ENCODE measurements at regions of chr5 and their contacts with region 1.

Region 1: DNA sequence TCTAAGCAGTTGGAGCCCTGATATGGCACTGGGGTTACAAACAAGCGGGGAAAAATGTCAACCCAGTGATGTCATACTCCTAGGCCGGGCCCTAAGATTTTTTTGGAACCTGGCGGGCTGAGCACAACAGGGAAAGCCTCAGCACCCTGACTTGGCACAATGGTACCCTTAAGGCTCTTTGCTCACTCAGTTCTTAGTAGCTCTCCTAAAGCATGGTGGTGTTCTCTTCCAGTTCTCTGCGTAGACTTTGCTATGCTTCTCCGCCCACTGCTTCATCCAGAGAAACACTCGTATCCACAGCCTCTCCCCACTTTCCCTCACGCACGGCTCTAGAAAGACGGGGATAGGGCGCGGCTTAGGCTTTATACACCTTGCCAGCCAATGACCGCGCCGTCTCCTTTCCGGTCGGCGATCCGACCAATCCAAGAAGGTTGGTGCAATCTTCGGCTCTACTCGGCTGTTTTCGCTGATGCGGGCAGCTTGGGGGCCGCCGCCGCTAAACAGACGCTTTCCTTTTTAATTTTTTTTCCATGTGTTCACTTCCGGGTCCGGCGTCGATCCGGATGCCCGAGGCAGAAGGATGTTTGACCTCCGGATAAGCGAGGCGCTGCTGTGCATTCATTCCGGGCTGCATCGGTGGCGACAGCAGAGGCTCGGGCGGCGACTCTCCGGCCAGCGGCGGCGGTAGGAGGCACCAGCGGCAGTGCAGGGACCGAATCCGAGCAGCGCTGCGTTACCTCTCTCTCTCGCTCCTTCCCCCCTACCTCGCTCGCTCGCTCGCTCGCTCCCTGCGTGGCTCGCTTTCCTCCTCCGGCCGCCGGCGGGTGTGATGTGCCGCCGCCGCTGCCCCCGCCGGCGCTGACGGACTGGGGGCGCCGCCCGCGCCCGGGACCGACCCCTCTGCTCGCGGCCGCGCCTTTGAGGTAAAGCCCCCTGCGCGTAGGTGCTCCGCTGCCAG is at the start of gene CSNK1G3:
- DNase-seq: peak; percentile 74 to 94 (median 89)
- ATAC-seq: peak; percentile 91
- H3K4me3 ChIP-seq: peak within 1 kb of the TSS; percentile 73
- H3K4me3 Mint-ChIP-seq: peak within 1 kb of the TSS; percentile 92 to 100 (median 99)
- H3K27ac ChIP-seq: peak within 1 kb of the TSS; percentile 75
- H3K27ac Mint-ChIP-seq: peak within 1 kb of the TSS; percentile 96 to 99 (median 98)
- H3K4me1 ChIP-seq: peaks cover 15 to 24% of the 10 kb centered on the region in 2 donors
- H3K4me1 Mint-ChIP-seq: peaks cover 29 to 55% (median 45%) of the 10 kb centered on the region in 7 donors
- H3K27me3 ChIP-seq: no peaks in the 10 kb centered on the region
- H3K27me3 Mint-ChIP-seq: peaks cover 0 to 16% (median 0%) of the 10 kb centered on the region in 5 donors
- total RNA-seq, gene CSNK1G3: 33.1 to 83.8 (median 71.0) TPM

Region 2: DNA sequence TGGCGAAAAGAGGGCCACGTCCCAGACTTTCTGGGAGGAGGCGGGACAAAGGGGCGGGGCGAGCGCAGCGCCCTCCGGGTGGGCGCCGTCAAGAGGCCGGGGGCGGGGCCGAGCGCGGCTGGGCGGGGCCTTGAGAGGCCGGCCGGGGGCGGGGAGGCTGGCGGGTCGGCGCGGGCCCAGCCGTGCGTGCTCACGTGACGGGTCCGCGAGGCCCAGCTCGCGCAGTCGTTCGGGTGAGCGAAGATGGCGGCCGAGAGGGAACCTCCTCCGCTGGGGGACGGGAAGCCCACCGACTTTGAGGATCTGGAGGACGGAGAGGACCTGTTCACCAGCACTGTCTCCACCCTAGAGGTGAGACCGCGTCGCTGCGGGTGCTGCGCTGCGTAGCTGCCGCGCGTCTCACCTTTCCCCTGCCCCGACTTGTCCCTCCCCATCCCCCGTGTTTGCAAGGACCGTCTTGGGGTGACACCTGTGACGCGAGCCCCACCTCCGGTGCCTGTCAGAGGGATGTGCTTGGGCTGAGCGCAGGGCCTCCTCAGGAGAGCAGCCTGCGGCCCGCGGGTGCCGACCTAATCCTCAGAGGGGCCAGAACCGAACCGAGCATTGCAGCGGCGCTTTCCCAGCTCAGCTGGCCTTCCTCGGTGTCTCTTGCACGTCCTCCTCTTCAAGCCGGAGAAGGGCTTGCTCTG is 736.9 kb before region 1 on chr5 and contains the start of gene SNX2:
- CTCF ChIA-PET with region 1: no interaction called
- POLR2A ChIA-PET with region 1: interaction called, 4 read pairs
- intact Hi-C with region 1: loop called (anchors 1 to 5 kb)
- DNase-seq: peak; percentile 82 to 89 (median 87)
- ATAC-seq: peak; percentile 95
- H3K4me3 ChIP-seq: peak within 1 kb of the TSS; percentile 79
- H3K4me3 Mint-ChIP-seq: peak within 1 kb of the TSS; percentile 90 to 98 (median 95)
- H3K27ac ChIP-seq: peak within 1 kb of the TSS; percentile 86
- H3K27ac Mint-ChIP-seq: peak within 1 kb of the TSS; percentile 84 to 97 (median 94)
- H3K4me1 ChIP-seq: peaks cover 22 to 23% of the 10 kb centered on the region in 2 donors
- H3K4me1 Mint-ChIP-seq: peaks cover 26 to 57% (median 48%) of the 10 kb centered on the region in 7 donors
- H3K27me3 ChIP-seq: no peaks in the 10 kb centered on the region
- H3K27me3 Mint-ChIP-seq: peaks cover 0 to 16% (median under 1%) of the 10 kb centered on the region in 5 donors
- total RNA-seq, gene SNX2: 35.7 to 79.7 (median 49.5) TPM

Region 3: GRCh38 chr5:123423278-123424149 is 88.4 kb before region 1 on chr5 and contains the start of gene CEP120:
- CTCF ChIA-PET with region 1: interaction called, 5 read pairs
- POLR2A ChIA-PET with region 1: interaction called, 88 read pairs
- intact Hi-C with region 1: loop called (anchors 1 kb)
- DNase-seq: peak; percentile 86 to 98 (median 96)
- ATAC-seq: peak; percentile 98
- H3K4me3 ChIP-seq: peak within 1 kb of the TSS; percentile 73
- H3K4me3 Mint-ChIP-seq: no peak within 1 kb of the TSS
- H3K27ac ChIP-seq: peak within 1 kb of the TSS; percentile 97
- H3K27ac Mint-ChIP-seq: peak within 1 kb of the TSS in 2 of 9 donors; percentile 99 to 100
- H3K4me1 ChIP-seq: peaks cover 26 to 29% of the 10 kb centered on the region in 2 donors
- H3K4me1 Mint-ChIP-seq: peaks cover 11 to 27% (median 20%) of the 10 kb centered on the region in 7 donors
- H3K27me3 ChIP-seq: no peaks in the 10 kb centered on the region
- H3K27me3 Mint-ChIP-seq: no peaks in the 10 kb centered on the region
- total RNA-seq, gene CEP120: 35.0 to 74.6 (median 60.0) TPM

Region 4: DNA sequence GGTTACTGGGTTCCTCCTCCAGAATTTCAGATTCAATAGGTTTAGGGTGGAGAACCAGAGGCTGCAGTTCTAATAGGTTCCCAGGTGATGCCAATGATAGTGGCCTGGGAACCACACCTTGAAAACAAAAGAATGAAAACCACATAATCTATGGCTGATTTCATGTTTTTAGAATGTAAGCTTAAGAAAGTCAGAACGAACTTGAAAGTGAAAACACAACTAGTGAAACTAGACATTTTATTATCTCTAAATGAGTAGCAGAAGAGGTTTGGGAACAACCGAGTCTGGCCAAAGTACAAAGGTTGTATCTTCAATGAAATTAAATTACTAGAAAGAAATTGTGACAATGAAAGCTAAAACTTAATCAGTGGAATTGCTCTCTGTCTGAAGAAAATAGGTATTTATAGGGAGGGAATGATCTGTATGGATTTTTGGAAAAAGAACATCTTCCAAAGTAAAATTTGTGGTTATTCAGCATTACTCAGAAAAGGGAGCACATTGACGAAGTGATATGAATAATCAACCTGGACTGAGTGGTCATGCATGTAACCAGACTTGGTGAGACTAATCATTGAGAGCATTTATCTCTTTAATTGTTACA is 63.8 kb before region 1 on chr5:
- CTCF ChIA-PET with region 1: no interaction called
- POLR2A ChIA-PET with region 1: no interaction called
- intact Hi-C with region 1: loop called in 1 of 2 experiments (anchors 1 kb)
- DNase-seq: no peak
- ATAC-seq: no peak
- H3K4me3 ChIP-seq: no peak overlapping the region
- H3K4me3 Mint-ChIP-seq: peak overlapping the region in 1 of 10 donors; percentile 61
- H3K27ac ChIP-seq: no peak overlapping the region
- H3K27ac Mint-ChIP-seq: peak overlapping the region in 3 of 9 donors; percentile 10 to 69 (median 55)
- H3K4me1 ChIP-seq: no peaks in the 10 kb centered on the region
- H3K4me1 Mint-ChIP-seq: peaks cover 0 to 33% (median 6%) of the 10 kb centered on the region in 7 donors
- H3K27me3 ChIP-seq: no peaks in the 10 kb centered on the region
- H3K27me3 Mint-ChIP-seq: peaks cover 0 to 10% (median 0%) of the 10 kb centered on the region in 5 donors

Region 5: GRCh38 chr5:123545506-123545905 is 33.6 kb after region 1 on chr5:
- CTCF ChIA-PET with region 1: no interaction called
- POLR2A ChIA-PET with region 1: interaction called, 4 read pairs
- intact Hi-C with region 1: loop called (anchors 1 kb)
- DNase-seq: peak in 7 of 9 donors; percentile 2 to 27 (median 9)
- ATAC-seq: no peak
- H3K4me3 ChIP-seq: no peak overlapping the region
- H3K4me3 Mint-ChIP-seq: no peak overlapping the region
- H3K27ac ChIP-seq: no peak overlapping the region
- H3K27ac Mint-ChIP-seq: no peak overlapping the region
- H3K4me1 ChIP-seq: peaks cover 9 to 19% of the 10 kb centered on the region in 2 donors
- H3K4me1 Mint-ChIP-seq: peaks cover 35 to 79% (median 56%) of the 10 kb centered on the region in 7 donors
- H3K27me3 ChIP-seq: no peaks in the 10 kb centered on the region
- H3K27me3 Mint-ChIP-seq: no peaks in the 10 kb centered on the region

Region 6: GRCh38 chr5:123610665-123611405 is 98.9 kb after region 1 on chr5:
- CTCF ChIA-PET with region 1: no interaction called
- POLR2A ChIA-PET with region 1: no interaction called
- intact Hi-C with region 1: loop called in 1 of 2 experiments (anchors 1 kb)
- DNase-seq: peak in 7 of 9 donors; percentile 22 to 62 (median 45)
- ATAC-seq: peak; percentile 85
- H3K4me3 ChIP-seq: no peak overlapping the region
- H3K4me3 Mint-ChIP-seq: no peak overlapping the region
- H3K27ac ChIP-seq: no peak overlapping the region
- H3K27ac Mint-ChIP-seq: peak overlapping the region in 5 of 9 donors; percentile 2 to 79 (median 36)
- H3K4me1 ChIP-seq: no peaks in the 10 kb centered on the region
- H3K4me1 Mint-ChIP-seq: peaks cover 0 to 9% (median 0%) of the 10 kb centered on the region in 7 donors
- H3K27me3 ChIP-seq: no peaks in the 10 kb centered on the region
- H3K27me3 Mint-ChIP-seq: no peaks in the 10 kb centered on the region